ENCODE measurements at regions of chr1 and their contacts with region 1.

Region 1: DNA sequence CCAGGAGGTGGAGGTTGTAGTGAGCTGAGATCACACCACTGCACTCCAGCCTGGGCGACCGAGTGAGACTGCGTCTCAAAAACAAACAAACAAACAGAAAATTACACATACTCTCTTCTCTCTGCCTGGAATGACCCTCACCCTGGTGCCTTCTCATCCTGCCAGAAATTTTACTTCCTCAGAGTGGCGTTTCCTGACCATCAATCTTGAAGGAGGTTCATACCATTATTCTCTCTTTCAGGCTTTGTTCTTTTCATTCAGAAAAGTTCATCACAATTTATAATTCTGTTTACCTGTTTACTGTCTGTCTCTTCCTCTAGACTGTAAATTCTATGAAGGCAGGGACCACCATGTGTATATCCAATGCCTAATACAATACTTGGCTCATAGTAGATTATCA is 79.3 kb downstream of the RPS6KA1 start:
- DNase-seq: no peak
- ATAC-seq: no peak
- H3K4me3 Mint-ChIP-seq: no peak overlapping the region
- H3K27ac Mint-ChIP-seq: no peak overlapping the region
- H3K4me1 Mint-ChIP-seq: no peaks in the 10 kb centered on the region
- H3K27me3 Mint-ChIP-seq: no peaks in the 10 kb centered on the region
- CTCF ChIP-seq: no peak

Region 2: DNA sequence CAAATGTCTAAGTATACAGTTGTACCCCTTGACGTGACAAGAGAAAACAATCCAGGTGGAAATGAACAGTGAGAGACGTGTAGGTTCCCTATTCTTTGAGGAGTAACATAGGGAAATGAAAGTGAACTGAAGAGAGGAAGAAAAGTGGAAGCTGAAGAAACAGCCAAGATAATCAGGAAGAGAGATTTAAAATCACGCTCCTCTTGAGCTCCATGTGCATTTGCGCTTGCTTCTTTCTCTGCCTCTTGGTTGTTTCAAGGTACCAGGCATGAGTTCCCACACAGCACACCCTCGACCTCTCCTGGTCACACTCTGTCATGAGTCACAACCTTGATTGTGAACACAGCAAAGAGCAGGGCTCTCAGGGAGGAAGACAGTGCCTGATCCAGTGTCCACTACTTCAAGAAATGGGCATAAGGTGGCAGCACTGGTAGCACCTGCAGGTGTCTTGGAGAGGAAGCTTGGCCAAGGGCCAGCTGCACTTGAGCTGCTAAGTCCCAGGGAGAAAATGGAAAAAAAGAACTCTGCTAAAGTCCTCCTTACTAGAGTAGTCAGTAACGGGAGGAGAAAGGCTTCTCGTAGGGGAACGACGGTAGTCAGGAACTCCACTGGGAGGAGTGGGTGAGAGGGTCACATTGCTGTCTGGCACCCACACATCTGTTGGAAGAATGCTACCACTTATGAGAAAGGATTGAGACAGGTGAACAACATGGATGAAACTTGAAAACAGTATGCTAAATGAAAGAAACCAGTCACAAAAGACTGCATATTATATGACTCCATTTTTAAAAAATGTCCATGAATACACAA is 68.6 kb after region 1 on chr1:
- CTCF ChIA-PET with region 1: interaction called, 43 read pairs
- POLR2A ChIA-PET with region 1: interaction called, 10 read pairs
- intact Hi-C with region 1: no loop called
- DNase-seq: peak; percentile 32
- ATAC-seq: peak; percentile 99
- H3K4me3 Mint-ChIP-seq: peak overlapping the region; percentile 59
- H3K27ac Mint-ChIP-seq: peak overlapping the region; percentile 83
- H3K4me1 Mint-ChIP-seq: peaks cover 14% of the 10 kb centered on the region
- H3K27me3 Mint-ChIP-seq: no peaks in the 10 kb centered on the region
- CTCF ChIP-seq: no peak

Region 3: DNA sequence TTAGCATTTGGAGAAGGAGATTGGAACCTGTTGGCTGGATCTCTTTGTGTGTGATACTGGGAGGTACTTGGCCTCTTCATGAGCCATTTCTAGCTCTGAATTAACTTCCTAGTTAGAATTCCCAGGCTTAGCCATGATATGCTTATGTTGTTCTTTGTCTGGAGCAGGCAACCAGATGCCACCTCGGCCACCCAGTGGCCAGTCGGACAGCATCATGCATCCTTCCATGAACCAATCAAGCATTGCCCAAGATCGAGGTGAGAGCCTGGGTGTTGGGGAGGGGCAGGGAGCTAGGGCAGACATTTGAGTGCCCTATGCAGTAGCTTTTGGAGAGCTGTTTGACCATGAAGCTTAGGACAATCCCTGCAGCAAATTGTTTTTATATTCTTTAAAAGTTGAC is 152.3 kb after region 1 on chr1:
- CTCF ChIA-PET with region 1: no interaction called
- POLR2A ChIA-PET with region 1: no interaction called
- intact Hi-C with region 1: no loop called
- DNase-seq: no peak
- ATAC-seq: no peak
- H3K4me3 Mint-ChIP-seq: no peak overlapping the region
- H3K27ac Mint-ChIP-seq: no peak overlapping the region
- H3K4me1 Mint-ChIP-seq: peaks cover 5% of the 10 kb centered on the region
- H3K27me3 Mint-ChIP-seq: no peaks in the 10 kb centered on the region
- CTCF ChIP-seq: no peak

Region 4: DNA sequence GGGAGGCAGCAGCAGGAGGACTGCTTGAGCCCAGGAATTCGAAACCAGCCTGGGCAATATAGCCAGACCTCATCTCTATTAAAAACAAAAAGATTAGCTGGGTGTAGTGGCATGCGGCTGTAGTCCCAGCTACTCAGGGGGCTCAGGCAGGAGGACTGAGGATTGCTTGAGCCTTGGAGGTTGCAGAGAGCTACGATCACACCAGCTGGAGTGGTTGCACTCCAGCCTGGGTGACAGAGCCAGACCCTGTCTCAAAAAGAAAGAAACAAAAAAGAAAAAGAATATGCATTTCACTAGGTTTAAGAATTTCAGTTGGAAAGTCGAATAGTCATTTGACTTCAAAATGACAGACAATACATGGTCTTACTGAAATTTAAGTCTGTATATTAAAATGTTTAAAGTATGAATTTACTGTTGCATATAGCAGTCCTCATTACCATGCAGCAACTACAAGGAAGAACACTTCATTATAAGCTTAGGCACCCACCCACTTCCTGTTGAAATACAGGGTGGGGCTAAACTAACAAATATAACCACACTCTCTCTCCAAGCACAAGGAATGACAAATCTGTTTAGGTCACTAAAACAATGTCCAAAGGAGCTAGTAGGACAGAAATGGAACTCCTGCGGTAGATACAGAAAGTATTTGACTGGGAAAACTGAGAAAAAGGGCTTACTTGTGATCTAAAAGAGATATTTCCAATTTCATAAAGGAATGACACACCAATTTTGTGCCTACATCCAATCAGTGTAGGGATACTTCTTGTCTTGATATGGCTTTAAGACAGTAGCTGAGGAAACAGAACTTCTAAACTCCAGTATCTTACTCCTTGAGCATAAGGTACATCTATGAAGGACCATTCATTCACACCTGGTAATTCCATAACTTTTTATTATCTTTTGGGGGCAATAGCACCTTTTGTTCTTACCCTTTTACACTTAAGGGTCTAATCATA is 827.6 kb after region 1 on chr1:
- CTCF ChIA-PET with region 1: no interaction called
- POLR2A ChIA-PET with region 1: no interaction called
- intact Hi-C with region 1: no loop called
- DNase-seq: no peak
- ATAC-seq: peak; percentile 49
- H3K4me3 Mint-ChIP-seq: peak overlapping the region; percentile 63
- H3K27ac Mint-ChIP-seq: peak overlapping the region; percentile 91
- H3K4me1 Mint-ChIP-seq: peaks cover 87% of the 10 kb centered on the region
- H3K27me3 Mint-ChIP-seq: no peaks in the 10 kb centered on the region
- CTCF ChIP-seq: no peak